ENCODE measurements at regions of chr4 and their contacts with region 1.

Region 1: DNA sequence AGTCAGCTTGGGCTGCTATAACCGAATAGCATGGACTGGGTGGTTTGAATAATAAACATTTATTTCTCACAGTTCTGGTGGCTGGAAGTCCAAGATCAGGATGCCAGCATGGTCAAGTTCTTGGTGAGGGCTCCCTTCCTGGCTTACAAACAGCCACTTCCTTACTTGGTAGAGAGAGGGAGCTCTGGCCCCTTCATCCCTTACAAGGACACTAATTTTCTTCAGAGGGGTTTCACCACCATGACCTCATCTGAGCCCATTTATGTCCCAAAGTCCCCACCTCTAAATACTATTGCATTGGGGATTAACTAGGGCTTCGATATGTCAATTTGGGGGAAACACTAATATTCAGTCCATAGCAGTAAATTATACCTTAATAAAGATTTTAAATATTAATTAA is 61.8 kb downstream of the CLNK start:
- DNase-seq: no peak
- H3K4me3 ChIP-seq: no peak overlapping the region
- H3K27ac ChIP-seq: no peak overlapping the region
- H3K4me1 ChIP-seq: 0 out of 2 replicates have a peak, but pooled peaks cover 5% of the 10 kb centered on the region
- H3K27me3 ChIP-seq: no peaks in the 10 kb centered on the region
- CTCF ChIP-seq: 0 out of 2 replicates have a peak, but pooled peaks have one; percentile 18

Region 2: GRCh38 chr4:10655986-10656385 is 33.3 kb after region 1 on chr4:
- CTCF ChIA-PET with region 1: interaction called, 15 read pairs
- POLR2A ChIA-PET with region 1: no interaction called
- intact Hi-C with region 1: loop called (anchors 5 kb)
- DNase-seq: peak in 1 of 2 experiments; percentile 68
- H3K4me3 ChIP-seq: no peak overlapping the region
- H3K27ac ChIP-seq: peak overlapping the region; percentile 48; the same call in 1 of the 2 replicates
- H3K4me1 ChIP-seq: peaks cover 21% of the 10 kb centered on the region
- H3K27me3 ChIP-seq: no peaks in the 10 kb centered on the region
- CTCF ChIP-seq: no peak

Region 3: GRCh38 chr4:10832806-10833628 is 210.3 kb after region 1 on chr4:
- CTCF ChIA-PET with region 1: no interaction called
- POLR2A ChIA-PET with region 1: no interaction called
- intact Hi-C with region 1: no loop called
- DNase-seq: no peak
- H3K4me3 ChIP-seq: no peak overlapping the region
- H3K27ac ChIP-seq: no peak overlapping the region
- H3K4me1 ChIP-seq: no peaks in the 10 kb centered on the region
- H3K27me3 ChIP-seq: no peaks in the 10 kb centered on the region
- CTCF ChIP-seq: no peak

Region 4: DNA sequence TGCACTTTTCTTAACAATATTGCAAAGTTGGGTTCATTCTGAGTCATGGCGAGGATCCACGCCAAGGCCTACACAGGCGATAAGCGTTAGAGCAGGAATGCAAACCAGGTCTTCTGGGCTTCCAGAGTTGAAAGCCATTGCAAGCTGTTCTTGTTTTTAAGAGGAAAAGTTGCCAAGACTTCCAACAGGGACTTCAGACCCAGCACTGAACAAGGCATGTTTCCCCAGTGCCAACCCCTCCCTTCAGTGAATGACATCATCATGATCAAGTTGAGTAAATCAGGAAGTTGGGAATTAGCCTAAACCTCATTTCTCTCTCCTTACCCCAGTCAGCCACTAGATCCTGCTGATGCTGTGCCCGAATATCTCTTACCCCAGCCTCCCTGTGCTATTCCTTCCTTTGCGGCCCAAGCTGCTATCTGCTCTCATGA is 450.9 kb after region 1 on chr4:
- CTCF ChIA-PET with region 1: no interaction called
- POLR2A ChIA-PET with region 1: no interaction called
- intact Hi-C with region 1: no loop called
- DNase-seq: no peak
- H3K4me3 ChIP-seq: no peak overlapping the region
- H3K27ac ChIP-seq: no peak overlapping the region
- H3K4me1 ChIP-seq: no peaks in the 10 kb centered on the region
- H3K27me3 ChIP-seq: no peaks in the 10 kb centered on the region
- CTCF ChIP-seq: no peak

Measured in PC-9 (cell line).